Stomach (tissue), 19 donors: ENCODE measurements at regions of chr11 and their contacts with region 1.

Region 1: DNA sequence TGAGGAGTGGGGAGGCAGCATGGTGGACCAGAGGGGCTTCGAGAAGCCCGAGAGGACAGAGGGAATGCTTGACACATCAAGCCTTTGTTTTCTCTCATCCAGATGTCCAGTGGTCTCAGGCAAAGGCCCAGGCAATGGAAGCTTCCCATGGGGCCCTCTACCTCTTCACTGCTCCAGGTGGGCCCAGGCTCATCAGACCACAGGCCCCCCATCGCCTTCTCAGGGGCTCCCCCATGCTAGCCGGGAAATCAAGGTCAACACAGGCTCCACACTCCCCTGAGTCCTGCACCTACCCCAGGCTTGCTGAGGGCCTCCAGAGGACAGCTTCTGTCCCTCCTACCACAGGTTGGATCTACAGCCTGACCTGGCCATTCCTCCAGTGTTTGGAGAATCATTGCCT is 157.5 kb downstream of the CHST1 start:
- DNase-seq: no peak
- H3K4me3 ChIP-seq: no peak overlapping the region
- H3K27ac ChIP-seq: no peak overlapping the region
- H3K4me1 ChIP-seq: no peaks in the 10 kb centered on the region
- H3K27me3 ChIP-seq: peaks cover 0 to 14% (median 0%) of the 10 kb centered on the region in 3 donors
- CTCF ChIP-seq: no peak
- EP300 ChIP-seq: no peak
- POLR2A ChIP-seq: no peak

Region 2: GRCh38 chr11:45457649-45458048 is 50.3 kb before region 1 on chr11:
- intact Hi-C with region 1: loop called (anchors 5 kb)
- DNase-seq: no peak
- H3K4me3 ChIP-seq: no peak overlapping the region
- H3K27ac ChIP-seq: no peak overlapping the region
- H3K4me1 ChIP-seq: no peaks in the 10 kb centered on the region
- H3K27me3 ChIP-seq: peaks cover 0 to 25% (median 0%) of the 10 kb centered on the region in 3 donors
- CTCF ChIP-seq: no peak
- EP300 ChIP-seq: no peak
- POLR2A ChIP-seq: no peak

Region 3: DNA sequence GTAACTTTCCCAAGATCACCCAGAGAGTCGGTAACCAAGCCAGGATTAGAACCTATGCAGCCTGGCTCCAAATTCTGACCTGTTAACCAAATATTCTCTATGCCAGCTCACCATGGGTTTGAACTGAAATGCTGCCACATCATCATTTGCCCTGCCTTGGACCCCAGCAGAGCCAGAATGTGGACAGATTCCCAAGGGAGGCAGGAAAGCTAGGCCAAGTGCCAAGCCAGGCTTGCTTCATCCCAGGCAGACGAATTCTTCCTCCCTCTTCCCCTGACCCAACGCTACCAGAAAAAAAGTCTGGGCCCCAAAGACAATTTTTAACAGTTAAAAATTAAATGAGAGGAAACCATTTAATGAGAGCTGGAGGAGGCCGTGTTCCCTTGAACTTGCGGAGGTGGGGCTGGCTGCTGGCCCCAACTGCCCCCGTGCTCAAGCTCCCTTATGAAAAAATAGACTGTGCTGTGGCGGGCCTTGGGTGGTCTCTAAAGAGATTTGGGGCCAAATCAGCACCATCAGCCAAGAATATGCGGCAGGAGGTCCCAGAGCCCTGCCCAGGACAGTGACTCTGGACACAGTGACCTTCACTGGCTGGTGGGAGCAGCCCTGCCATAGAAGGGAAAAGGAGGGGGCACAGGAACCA is 37.6 kb before region 1 on chr11:
- intact Hi-C with region 1: no loop called
- DNase-seq: peak in 1 of 2 donors; percentile 31
- H3K4me3 ChIP-seq: no peak overlapping the region
- H3K27ac ChIP-seq: no peak overlapping the region
- H3K4me1 ChIP-seq: no peaks in the 10 kb centered on the region
- H3K27me3 ChIP-seq: no peaks in the 10 kb centered on the region
- CTCF ChIP-seq: no peak
- EP300 ChIP-seq: no peak
- POLR2A ChIP-seq: no peak